Gastrocnemius medialis (tissue), 4 donors: ENCODE measurements at regions of chr11 and their contacts with region 1.

Region 1: GRCh38 chr11:111992206-111992855 is 32.9 kb upstream of the DLAT start:
- DNase-seq: no peak
- ATAC-seq: no peak
- H3K4me3 ChIP-seq: no peak overlapping the region
- H3K27ac ChIP-seq: peak overlapping the region; percentile 84 to 94 (median 88)
- H3K4me1 ChIP-seq: peaks cover 21 to 31% of the 10 kb centered on the region in 2 donors
- H3K27me3 ChIP-seq: no peaks in the 10 kb centered on the region
- CTCF ChIP-seq: no peak
- POLR2A ChIP-seq: no peak

Region 2: GRCh38 chr11:111932611-111932950 is 59.8 kb before region 1 on chr11:
- in situ Hi-C with region 1: loop called in 2 of 4 experiments (anchors 5 kb)
- intact Hi-C with region 1: loop called (anchors 1 kb)
- DNase-seq: no peak
- ATAC-seq: no peak
- H3K4me3 ChIP-seq: no peak overlapping the region
- H3K27ac ChIP-seq: no peak overlapping the region
- H3K4me1 ChIP-seq: peaks cover 14 to 29% of the 10 kb centered on the region in 2 donors
- H3K27me3 ChIP-seq: no peaks in the 10 kb centered on the region
- CTCF ChIP-seq: no peak
- POLR2A ChIP-seq: no peak